ENCODE measurements at regions of chr19 and their contacts with region 1.

Region 1: DNA sequence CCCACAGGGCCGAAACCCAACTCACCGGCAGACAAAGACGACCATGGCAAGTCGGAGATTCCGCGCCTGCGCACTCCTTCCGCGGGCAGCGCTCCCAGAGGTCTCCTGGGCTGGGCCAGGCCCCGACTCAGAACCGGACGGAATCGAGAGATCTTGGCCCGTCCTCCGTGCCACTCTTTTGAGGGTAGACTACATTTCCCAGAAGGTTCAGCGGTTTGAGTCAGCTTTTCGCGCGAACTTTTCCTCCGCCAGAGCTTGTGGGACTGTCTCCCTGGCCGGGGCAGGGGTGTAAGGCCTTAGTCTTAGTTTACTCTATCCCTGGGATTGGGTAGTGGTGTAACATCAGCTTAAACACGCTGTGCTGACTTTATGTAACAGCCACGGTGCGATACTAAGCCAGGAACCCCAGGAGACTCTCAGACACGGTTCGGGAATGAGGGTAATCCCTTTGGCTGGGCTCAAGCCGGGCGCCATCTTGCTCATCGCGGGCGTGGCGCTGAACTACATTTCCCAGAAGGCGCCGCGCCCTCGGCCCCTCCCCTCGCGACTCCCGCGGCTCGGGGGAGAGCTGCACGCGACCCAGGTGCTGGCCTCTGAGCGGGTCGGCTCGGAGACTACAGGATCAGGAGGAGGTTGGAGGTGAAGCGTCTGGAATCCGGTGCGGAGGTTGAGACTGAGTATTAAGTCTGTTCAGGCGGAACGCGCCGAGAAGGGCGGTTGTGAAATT is at the start of gene ZNF260:
- DNase-seq: peak; percentile 90 to 94
- ATAC-seq: peak; percentile 77 to 92 (median 84)
- H3K4me3 ChIP-seq: peak within 1 kb of the TSS; percentile 76
- H3K4me3 Mint-ChIP-seq: peak within 1 kb of the TSS; percentile 97
- H3K27ac ChIP-seq: peak within 1 kb of the TSS; percentile 93
- H3K27ac Mint-ChIP-seq: peak within 1 kb of the TSS; percentile 94 to 99
- H3K4me1 ChIP-seq: peaks cover 17% of the 10 kb centered on the region
- H3K4me1 Mint-ChIP-seq: peaks cover 27 to 30% of the 10 kb centered on the region in 2 donors
- H3K27me3 ChIP-seq: no peaks in the 10 kb centered on the region
- H3K27me3 Mint-ChIP-seq: no peaks in the 10 kb centered on the region
- CTCF ChIP-seq: no peak
- total RNA-seq, gene ZNF260: 8.0 to 9.4 (median 8.4) TPM

Region 2: GRCh38 chr19:36489118-36489919 is 39.0 kb before region 1 on chr19 and contains the start of gene ZNF566:
- intact Hi-C with region 1: loop called (anchors 1 kb)
- DNase-seq: peak; percentile 84 to 96
- ATAC-seq: peak; percentile 83 to 94 (median 90)
- H3K4me3 ChIP-seq: peak within 1 kb of the TSS; percentile 69
- H3K4me3 Mint-ChIP-seq: peak within 1 kb of the TSS; percentile 99
- H3K27ac ChIP-seq: peak within 1 kb of the TSS; percentile 85
- H3K27ac Mint-ChIP-seq: peak within 1 kb of the TSS; percentile 97 to 100
- H3K4me1 ChIP-seq: peaks cover 14% of the 10 kb centered on the region
- H3K4me1 Mint-ChIP-seq: peaks cover 29 to 31% of the 10 kb centered on the region in 2 donors
- H3K27me3 ChIP-seq: no peaks in the 10 kb centered on the region
- H3K27me3 Mint-ChIP-seq: no peaks in the 10 kb centered on the region
- CTCF ChIP-seq: no peak
- total RNA-seq, gene ZNF566: 7.9 to 16.0 (median 12.4) TPM

Region 3: GRCh38 chr19:36605101-36605876 is 76.9 kb after region 1 on chr19 and contains the start of gene ZNF382:
- intact Hi-C with region 1: loop called (anchors 1 kb)
- DNase-seq: peak; percentile 75 to 92
- ATAC-seq: peak; percentile 51 to 81 (median 62)
- H3K4me3 ChIP-seq: peak within 1 kb of the TSS; percentile 78
- H3K4me3 Mint-ChIP-seq: peak within 1 kb of the TSS; percentile 81
- H3K27ac ChIP-seq: peak within 1 kb of the TSS; percentile 90
- H3K27ac Mint-ChIP-seq: peak within 1 kb of the TSS; percentile 80 to 89
- H3K4me1 ChIP-seq: peaks cover 20% of the 10 kb centered on the region
- H3K4me1 Mint-ChIP-seq: peaks cover 20 to 28% of the 10 kb centered on the region in 2 donors
- H3K27me3 ChIP-seq: no peaks in the 10 kb centered on the region
- H3K27me3 Mint-ChIP-seq: no peaks in the 10 kb centered on the region
- CTCF ChIP-seq: no peak
- total RNA-seq, gene ZNF382: 3.2 to 8.1 (median 4.2) TPM

Region 4: GRCh38 chr19:36797786-36798108 is 269.4 kb after region 1 on chr19:
- intact Hi-C with region 1: loop called (anchors 1 kb)
- DNase-seq: no peak
- ATAC-seq: no peak
- H3K4me3 ChIP-seq: peak overlapping the region; percentile 96
- H3K4me3 Mint-ChIP-seq: peak overlapping the region; percentile 99
- H3K27ac ChIP-seq: peak overlapping the region; percentile 90
- H3K27ac Mint-ChIP-seq: peak overlapping the region; percentile 95 to 99
- H3K4me1 ChIP-seq: peaks cover 17% of the 10 kb centered on the region
- H3K4me1 Mint-ChIP-seq: peaks cover 3 to 7% of the 10 kb centered on the region in 2 donors
- H3K27me3 ChIP-seq: no peaks in the 10 kb centered on the region
- H3K27me3 Mint-ChIP-seq: no peaks in the 10 kb centered on the region
- CTCF ChIP-seq: no peak

Region 5: DNA sequence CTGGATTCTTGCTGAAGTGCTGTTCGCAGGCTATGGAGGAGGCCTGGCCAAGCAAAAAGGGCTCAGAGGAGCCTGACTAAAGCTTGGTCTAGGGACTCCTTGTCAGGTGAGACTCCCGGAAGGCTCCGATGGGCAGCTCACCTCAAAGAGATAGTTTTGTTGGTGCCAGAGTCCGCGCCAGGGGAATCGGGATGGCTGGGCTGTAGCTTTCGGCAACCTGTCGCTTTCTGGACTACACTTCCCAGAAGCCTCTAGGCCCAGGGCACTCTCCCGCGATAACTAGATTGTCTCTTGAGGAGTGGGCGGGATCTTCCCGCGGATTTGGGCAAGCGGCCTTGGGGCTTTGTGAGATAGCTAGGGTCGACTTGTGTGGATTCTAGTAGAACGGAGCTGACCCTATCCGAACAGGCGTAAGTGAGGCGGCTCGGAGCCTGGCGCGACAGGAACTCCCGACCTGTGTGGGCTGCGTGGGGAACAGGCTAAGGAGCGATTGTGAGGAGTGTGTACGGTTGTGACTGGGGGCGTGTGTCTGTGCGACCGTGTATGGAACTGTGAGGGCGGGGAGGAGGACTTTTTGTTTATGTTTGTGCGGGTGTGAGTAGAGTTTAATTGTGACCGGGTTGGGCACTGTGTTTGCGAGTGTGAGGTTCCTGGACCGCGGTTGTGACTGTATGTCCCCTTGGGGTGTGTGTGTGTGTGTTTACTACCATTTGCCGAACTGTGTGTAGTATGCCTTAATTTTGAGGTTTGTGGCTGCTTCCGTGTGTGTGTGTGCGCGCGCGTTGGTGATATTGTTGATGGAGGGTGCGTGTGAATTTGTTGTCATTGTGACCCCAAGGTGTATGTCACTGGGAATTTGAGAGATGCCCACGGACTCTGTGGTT is 322.4 kb after region 1 on chr19 and contains the start of gene ZNF345:
- intact Hi-C with region 1: loop called (anchors 2 kb)
- DNase-seq: peak; percentile 73 to 94
- ATAC-seq: peak; percentile 79 to 94 (median 85)
- H3K4me3 ChIP-seq: peak within 1 kb of the TSS; percentile 62
- H3K4me3 Mint-ChIP-seq: no peak within 1 kb of the TSS
- H3K27ac ChIP-seq: peak within 1 kb of the TSS; percentile 85
- H3K27ac Mint-ChIP-seq: no peak within 1 kb of the TSS
- H3K4me1 ChIP-seq: peaks cover 23% of the 10 kb centered on the region
- H3K4me1 Mint-ChIP-seq: peaks cover 0 to 10% of the 10 kb centered on the region in 2 donors
- H3K27me3 ChIP-seq: no peaks in the 10 kb centered on the region
- H3K27me3 Mint-ChIP-seq: no peaks in the 10 kb centered on the region
- CTCF ChIP-seq: no peak
- total RNA-seq, gene ZNF345: 7.1 to 19.5 (median 10.0) TPM

Measured in natural killer cell (primary cell).